T-cell (primary cell): ENCODE measurements at regions of chr1 and their contacts with region 1.

Region 1: DNA sequence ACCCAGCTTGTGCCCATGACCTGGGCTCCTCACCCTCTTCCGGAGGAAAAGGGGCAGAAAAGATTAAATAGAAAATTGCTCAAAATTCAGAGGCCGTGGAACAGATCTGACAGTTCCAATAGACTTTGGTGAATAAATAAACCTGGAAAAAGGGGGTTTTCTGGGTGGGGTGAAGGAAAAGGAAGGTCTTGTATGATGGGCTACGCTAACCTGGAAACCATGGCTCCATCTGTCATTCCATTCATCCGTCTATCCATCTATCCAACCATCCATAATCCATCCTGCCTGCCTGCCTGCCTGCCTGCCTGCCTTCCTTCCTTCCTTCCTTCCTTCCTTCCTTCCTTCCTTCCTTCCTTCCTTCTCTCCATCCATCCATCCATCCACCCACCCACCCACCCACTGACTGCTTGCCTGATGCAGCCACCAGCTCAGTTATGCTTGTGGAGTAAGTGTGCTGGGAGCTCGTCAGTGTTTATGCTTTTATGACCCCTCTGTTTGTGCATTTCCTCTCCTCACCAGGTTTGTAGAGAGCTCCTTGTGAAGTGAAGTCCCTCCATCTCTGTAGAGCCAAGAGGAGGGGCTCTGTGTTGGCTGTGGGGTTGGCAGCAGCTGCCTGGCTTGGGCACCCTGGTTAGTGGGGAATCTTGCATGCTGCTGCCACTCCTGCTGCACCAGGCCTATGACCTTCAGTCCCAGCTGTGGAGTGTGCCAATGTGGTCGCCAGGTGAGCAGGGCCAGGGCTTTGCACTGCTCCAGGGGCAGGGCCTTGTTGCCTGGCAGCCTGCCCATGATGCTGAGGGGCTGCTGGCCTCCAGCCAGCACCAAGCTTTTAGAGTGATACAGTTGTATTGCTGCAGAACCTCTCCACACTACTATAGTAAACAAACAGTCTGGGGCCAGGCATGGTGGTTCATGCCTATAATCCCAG is 16.0 kb upstream of the POU3F1 start:
- DNase-seq: no peak
- ATAC-seq: no peak
- H3K4me3 ChIP-seq: no peak overlapping the region
- H3K4me3 Mint-ChIP-seq: no peak overlapping the region
- H3K27ac ChIP-seq: no peak overlapping the region
- H3K27ac Mint-ChIP-seq: no peak overlapping the region
- H3K4me1 ChIP-seq: no peaks in the 10 kb centered on the region
- H3K4me1 Mint-ChIP-seq: no peaks in the 10 kb centered on the region
- H3K27me3 ChIP-seq: peaks cover 0 to 7% of the 10 kb centered on the region in 2 experiments
- H3K27me3 Mint-ChIP-seq: peaks cover 4 to 10% of the 10 kb centered on the region in 2 donors

Region 2: DNA sequence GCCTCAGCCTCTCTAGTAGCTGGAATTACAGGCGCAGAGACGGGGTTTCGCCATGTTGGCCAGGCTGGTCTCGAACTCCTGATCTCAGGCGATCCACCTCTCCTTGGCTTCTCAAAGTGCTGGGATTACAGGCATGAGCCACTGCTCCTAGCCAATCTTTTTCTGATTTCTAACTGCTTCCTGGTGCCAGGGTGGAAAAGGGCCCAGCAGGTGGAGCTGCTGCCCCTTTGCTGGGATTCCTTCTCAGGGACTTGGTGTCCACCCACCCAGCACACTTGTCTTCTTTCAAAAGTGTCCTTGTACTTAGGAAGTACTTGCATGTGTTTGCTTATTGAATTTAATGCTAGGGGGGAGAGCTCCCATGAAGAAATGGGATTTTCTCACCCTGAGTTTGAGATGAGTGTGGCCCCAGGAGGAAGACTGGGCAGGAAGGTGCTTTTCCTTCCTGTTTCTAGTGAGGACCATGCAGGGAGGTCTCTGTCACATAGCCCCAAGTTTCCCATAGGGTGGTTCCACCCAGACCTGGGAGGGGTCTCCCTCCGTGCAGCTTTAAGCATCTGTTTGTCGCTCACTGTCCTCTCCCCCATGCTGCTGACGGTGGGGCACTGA is 35.9 kb before region 1 on chr1:
- CTCF ChIA-PET with region 1: no interaction called
- POLR2A ChIA-PET with region 1: interaction called in 1 of 2 experiments, 20 read pairs
- DNase-seq: peak in 4 of 35 experiments; percentile 23 to 51 (median 34)
- ATAC-seq: no peak
- H3K4me3 ChIP-seq: no peak overlapping the region
- H3K4me3 Mint-ChIP-seq: no peak overlapping the region
- H3K27ac ChIP-seq: no peak overlapping the region
- H3K27ac Mint-ChIP-seq: no peak overlapping the region
- H3K4me1 ChIP-seq: peaks cover 0 to 48% of the 10 kb centered on the region in 2 experiments
- H3K4me1 Mint-ChIP-seq: peaks cover 15 to 42% (median 30%) of the 10 kb centered on the region in 3 donors
- H3K27me3 ChIP-seq: peaks cover 0 to 2% of the 10 kb centered on the region in 2 experiments
- H3K27me3 Mint-ChIP-seq: no peaks in the 10 kb centered on the region